Left lung (tissue), 14 donors: ENCODE measurements at regions of chr20 and their contacts with region 1.

Region 1: GRCh38 chr20:44187763-44188709 is 1.0 kb upstream of the JPH2 start:
- DNase-seq: no peak
- ATAC-seq: peak; percentile 22
- H3K4me3 ChIP-seq: peak overlapping the region in 1 of 2 donors; percentile 21
- H3K27ac ChIP-seq: no peak overlapping the region
- H3K4me1 ChIP-seq: peaks cover 9 to 15% of the 10 kb centered on the region in 2 donors
- H3K27me3 ChIP-seq: peaks cover 7 to 50% of the 10 kb centered on the region in 2 donors
- CTCF ChIP-seq: no peak

Region 2: GRCh38 chr20:43799150-43799711 is 388.8 kb before region 1 on chr20:
- intact Hi-C with region 1: no loop called
- DNase-seq: peak in 2 of 4 donors; percentile 11 to 17
- ATAC-seq: no peak
- H3K4me3 ChIP-seq: no peak overlapping the region
- H3K27ac ChIP-seq: no peak overlapping the region
- H3K4me1 ChIP-seq: no peaks in the 10 kb centered on the region
- H3K27me3 ChIP-seq: peaks cover 0 to 3% of the 10 kb centered on the region in 2 donors
- CTCF ChIP-seq: no peak

Region 3: DNA sequence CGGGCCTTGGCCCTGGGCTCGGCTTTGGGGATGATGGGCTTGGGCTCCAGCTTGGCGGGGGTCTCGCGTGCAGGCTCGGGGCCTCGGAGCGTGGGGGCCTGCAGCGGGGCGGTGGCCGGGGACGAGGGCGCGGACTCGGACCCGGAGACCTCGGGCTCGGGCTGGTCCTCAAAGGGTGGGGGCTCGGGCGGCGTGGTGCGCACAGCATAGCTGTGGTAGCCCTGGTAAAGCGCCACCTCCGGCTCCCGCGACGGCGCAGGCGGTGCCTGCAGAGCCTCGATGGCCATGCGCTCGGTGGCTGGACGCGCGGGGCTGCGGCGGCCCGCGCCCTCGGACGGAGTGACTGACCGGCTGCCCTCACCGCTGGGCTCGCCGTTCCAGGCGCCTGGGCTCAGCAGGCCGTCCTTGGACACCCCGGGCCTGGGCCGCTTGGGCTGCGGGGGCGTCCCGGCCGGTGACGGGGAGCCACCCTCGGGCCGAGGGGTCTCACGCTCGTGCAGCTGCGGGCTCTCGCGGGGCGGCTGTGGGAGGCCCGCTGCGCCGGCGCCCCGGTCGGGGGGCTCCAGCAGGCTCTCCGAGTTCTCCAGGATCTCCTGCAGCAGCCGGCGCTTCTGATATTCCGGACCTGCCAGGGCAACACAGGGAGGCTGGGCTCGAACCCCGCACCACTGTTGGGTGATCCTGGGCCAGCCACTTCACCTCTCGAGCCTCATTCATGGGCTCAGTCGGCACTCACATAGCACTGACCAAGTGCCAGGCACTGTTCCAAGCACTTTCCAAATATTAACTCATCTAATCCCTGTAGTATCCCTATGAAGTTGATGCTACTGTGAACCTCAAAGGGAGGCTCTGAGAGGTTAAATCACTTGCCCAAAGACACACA is 72.0 kb before region 1 on chr20:
- intact Hi-C with region 1: loop called in 1 of 2 experiments (anchors 2 kb)
- DNase-seq: peak in 1 of 4 donors; percentile 74
- ATAC-seq: no peak
- H3K4me3 ChIP-seq: no peak overlapping the region
- H3K27ac ChIP-seq: no peak overlapping the region
- H3K4me1 ChIP-seq: no peaks in the 10 kb centered on the region
- H3K27me3 ChIP-seq: peaks cover 10 to 46% of the 10 kb centered on the region in 2 donors
- CTCF ChIP-seq: no peak